GM12878 (cell line): ENCODE measurements at regions of chr1 and their contacts with region 1.

Region 1: GRCh38 chr1:27603681-27604578 is at the start of gene AHDC1:
- DNase-seq: no peak
- ATAC-seq: peak; percentile 75
- H3K4me3 ChIP-seq: peak within 1 kb of the TSS; percentile 83
- H3K27ac ChIP-seq: no peak within 1 kb of the TSS; the same call in 1 of the 2 replicates
- H3K4me1 ChIP-seq: peaks cover 40% of the 10 kb centered on the region
- H3K27me3 ChIP-seq: no peaks in the 10 kb centered on the region
- CTCF ChIP-seq: no peak
- EP300 ChIP-seq: no peak
- POLR2A ChIP-seq: peak; percentile 94
- RAD21 ChIP-seq: no peak
- polyA plus RNA-seq, gene AHDC1: 0.21 to 0.26 TPM

Region 2: DNA sequence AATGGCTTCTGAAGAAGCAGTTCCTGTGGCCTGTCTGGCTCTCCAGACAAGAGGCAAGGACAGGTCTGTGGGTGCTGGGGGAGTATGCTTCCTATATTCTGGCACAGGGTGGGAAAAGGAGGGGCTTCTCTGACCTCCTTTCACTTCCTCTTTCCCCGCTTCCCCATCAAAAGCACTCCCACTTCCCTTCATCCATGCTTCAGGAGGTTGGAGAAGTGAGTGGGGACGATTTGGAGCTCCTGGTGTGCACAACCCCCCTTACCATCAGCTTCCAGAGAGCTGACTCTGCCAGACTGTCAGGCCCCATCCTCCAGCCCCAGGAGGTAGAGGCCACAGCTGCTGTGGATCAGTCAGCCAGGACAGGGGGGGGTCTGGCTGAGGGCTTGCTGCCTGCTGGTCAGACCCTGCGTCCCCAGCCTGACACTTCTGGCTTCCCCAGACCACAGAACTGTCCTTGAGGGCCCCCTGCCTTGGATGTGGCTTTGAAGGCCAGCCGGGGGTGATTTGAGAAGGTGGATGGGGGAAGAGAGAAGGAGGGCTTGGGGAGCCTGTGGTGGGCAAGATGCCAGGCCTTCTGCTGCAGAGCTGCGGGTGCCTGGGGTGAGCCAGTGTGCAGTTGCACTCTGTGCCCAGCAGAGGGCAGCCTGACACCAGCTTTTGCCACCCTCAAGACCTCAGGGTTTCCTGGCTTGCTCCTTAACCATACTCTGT is 303.4 kb before region 1 on chr1:
- CTCF ChIA-PET with region 1: interaction called, 143 read pairs
- POLR2A ChIA-PET with region 1: interaction called, 3 read pairs
- RAD21 ChIA-PET with region 1: interaction called, 12 read pairs
- SMC1A ChIA-PET with region 1: interaction called, 18 read pairs
- in situ Hi-C with region 1: loop called (anchors 5 kb)
- intact Hi-C with region 1: loop called (anchors 2 kb)
- DNase-seq: peak; percentile 32
- ATAC-seq: peak; percentile 96
- H3K4me3 ChIP-seq: no peak overlapping the region
- H3K27ac ChIP-seq: no peak overlapping the region; the same call in 1 of the 2 replicates
- H3K4me1 ChIP-seq: peaks cover 5% of the 10 kb centered on the region
- H3K27me3 ChIP-seq: no peaks in the 10 kb centered on the region
- CTCF ChIP-seq: peak; percentile 99; a peak in 5 of 6 replicates
- EP300 ChIP-seq: no peak
- POLR2A ChIP-seq: no peak
- RAD21 ChIP-seq: peak; percentile 92

Region 3: DNA sequence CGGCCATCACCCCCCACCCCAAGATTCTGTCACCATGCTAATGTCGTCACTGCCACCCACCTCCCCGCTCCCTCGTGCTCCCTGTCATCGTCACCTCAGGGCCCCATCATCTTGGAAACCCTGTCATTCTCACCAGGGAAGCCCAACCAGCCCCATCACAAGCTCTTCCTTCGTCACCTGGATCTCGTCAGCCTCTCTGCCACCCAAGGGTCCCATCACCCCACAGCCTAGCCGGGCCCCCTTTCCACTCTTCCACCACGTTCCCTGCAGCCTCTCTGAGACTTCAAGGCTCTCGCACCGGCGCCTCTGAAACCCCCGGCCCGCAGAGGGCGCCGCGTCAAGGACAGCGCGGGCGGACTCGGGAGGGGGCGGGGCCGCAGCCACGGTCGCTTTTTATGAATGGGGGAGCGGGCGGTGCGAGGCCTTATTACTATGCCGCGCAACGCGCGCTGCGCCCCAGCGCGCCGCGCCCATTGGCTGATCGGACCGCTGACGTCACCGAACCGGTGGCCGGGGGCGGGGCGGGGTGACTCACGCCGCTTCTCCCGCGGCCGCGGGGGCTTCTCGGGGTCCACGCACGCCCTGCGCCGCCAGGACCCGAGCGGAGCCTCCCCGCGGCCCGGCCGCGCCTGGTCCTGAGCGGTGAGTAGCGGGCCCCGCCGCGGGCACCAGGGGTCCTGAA is 211.7 kb before region 1 on chr1 and contains the start of gene GPR3:
- CTCF ChIA-PET with region 1: interaction called, 133 read pairs
- POLR2A ChIA-PET with region 1: interaction called, 9 read pairs
- RAD21 ChIA-PET with region 1: interaction called, 21 read pairs
- SMC1A ChIA-PET with region 1: interaction called, 26 read pairs
- in situ Hi-C with region 1: loop called (anchors 5 kb)
- intact Hi-C with region 1: loop called (anchors 1 kb)
- DNase-seq: no peak
- ATAC-seq: peak; percentile 89
- H3K4me3 ChIP-seq: peak within 1 kb of the TSS; percentile 71
- H3K27ac ChIP-seq: no peak within 1 kb of the TSS
- H3K4me1 ChIP-seq: peaks cover 8% of the 10 kb centered on the region
- H3K27me3 ChIP-seq: no peaks in the 10 kb centered on the region
- CTCF ChIP-seq: peak; percentile 47 to 61 (median 52)
- EP300 ChIP-seq: no peak
- POLR2A ChIP-seq: no peak
- RAD21 ChIP-seq: peak; percentile 31
- polyA plus RNA-seq, gene GPR3: not detected

Region 4: GRCh38 chr1:27489910-27490741 is 113.8 kb before region 1 on chr1 and contains the start of gene WASF2:
- CTCF ChIA-PET with region 1: interaction called, 6 read pairs
- POLR2A ChIA-PET with region 1: interaction called, 3 read pairs
- RAD21 ChIA-PET with region 1: interaction called, 5 read pairs
- SMC1A ChIA-PET with region 1: interaction called, 4 read pairs
- in situ Hi-C with region 1: no loop called
- intact Hi-C with region 1: loop called (anchors 10 kb)
- DNase-seq: peak; percentile 89
- ATAC-seq: peak; percentile 92
- H3K4me3 ChIP-seq: peak within 1 kb of the TSS; percentile 98
- H3K27ac ChIP-seq: peak within 1 kb of the TSS; percentile 99
- H3K4me1 ChIP-seq: peaks cover 27% of the 10 kb centered on the region
- H3K27me3 ChIP-seq: no peaks in the 10 kb centered on the region
- CTCF ChIP-seq: no peak
- EP300 ChIP-seq: peak in 1 of 2 experiments; percentile 35; a peak in 1 of 4 replicates
- POLR2A ChIP-seq: peak; percentile 91
- RAD21 ChIP-seq: no peak
- polyA plus RNA-seq, gene WASF2: 7.0 to 9.3 TPM

Region 5: DNA sequence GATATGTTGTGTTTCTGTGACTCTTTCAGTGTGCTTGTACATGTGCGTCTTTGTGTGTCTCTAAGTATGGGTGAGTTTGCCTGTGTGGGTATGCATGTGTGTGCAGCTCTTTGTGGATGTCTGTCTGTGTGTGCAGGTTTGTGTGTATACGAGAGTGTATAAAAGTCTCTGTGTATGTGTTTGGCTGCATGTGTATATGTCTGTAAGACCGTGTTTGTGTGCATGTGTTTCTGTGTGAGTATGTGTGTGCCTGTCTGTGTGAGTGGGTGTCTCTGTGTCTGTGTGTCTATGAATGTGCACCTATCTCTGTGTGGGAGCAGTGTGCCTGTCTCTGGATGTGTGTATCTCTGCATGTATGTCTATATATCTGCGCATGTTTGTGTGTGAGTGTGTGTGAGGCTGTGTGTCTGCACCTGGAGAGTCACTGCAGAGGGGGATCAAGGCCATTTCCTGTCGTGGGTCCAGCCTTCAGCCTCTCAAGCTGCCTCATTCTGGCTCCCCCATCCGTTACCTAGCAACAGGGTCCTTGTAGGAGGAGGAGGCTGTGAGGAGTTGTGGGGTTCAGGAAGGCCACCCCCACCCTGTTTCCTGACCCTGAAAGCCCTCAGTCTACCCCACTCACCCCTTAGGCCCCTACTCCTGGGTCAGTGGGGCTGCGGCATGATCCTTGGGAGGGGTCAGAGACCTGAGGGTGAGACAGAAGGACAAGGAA is 20.7 kb after region 1 on chr1:
- CTCF ChIA-PET with region 1: interaction called, 208 read pairs
- POLR2A ChIA-PET with region 1: interaction called, 50 read pairs
- RAD21 ChIA-PET with region 1: interaction called, 183 read pairs
- SMC1A ChIA-PET with region 1: interaction called, 114 read pairs
- in situ Hi-C with region 1: no loop called
- intact Hi-C with region 1: no loop called
- DNase-seq: peak; percentile 67
- ATAC-seq: peak; percentile 31
- H3K4me3 ChIP-seq: peak overlapping the region; percentile 93
- H3K27ac ChIP-seq: peak overlapping the region; percentile 85
- H3K4me1 ChIP-seq: peaks cover 63% of the 10 kb centered on the region
- H3K27me3 ChIP-seq: no peaks in the 10 kb centered on the region
- CTCF ChIP-seq: no peak
- EP300 ChIP-seq: no peak
- POLR2A ChIP-seq: no peak
- RAD21 ChIP-seq: no peak

Region 6: GRCh38 chr1:27650539-27651175 is 46.7 kb after region 1 on chr1:
- CTCF ChIA-PET with region 1: interaction called, 30 read pairs
- POLR2A ChIA-PET with region 1: interaction called, 49 read pairs
- RAD21 ChIA-PET with region 1: interaction called, 5 read pairs
- SMC1A ChIA-PET with region 1: interaction called, 38 read pairs
- in situ Hi-C with region 1: no loop called
- intact Hi-C with region 1: no loop called
- DNase-seq: no peak
- ATAC-seq: peak; percentile 38
- H3K4me3 ChIP-seq: no peak overlapping the region
- H3K27ac ChIP-seq: peak overlapping the region; percentile 24
- H3K4me1 ChIP-seq: peaks cover 30% of the 10 kb centered on the region
- H3K27me3 ChIP-seq: no peaks in the 10 kb centered on the region
- CTCF ChIP-seq: no peak
- EP300 ChIP-seq: no peak
- POLR2A ChIP-seq: no peak
- RAD21 ChIP-seq: no peak

Region 7: DNA sequence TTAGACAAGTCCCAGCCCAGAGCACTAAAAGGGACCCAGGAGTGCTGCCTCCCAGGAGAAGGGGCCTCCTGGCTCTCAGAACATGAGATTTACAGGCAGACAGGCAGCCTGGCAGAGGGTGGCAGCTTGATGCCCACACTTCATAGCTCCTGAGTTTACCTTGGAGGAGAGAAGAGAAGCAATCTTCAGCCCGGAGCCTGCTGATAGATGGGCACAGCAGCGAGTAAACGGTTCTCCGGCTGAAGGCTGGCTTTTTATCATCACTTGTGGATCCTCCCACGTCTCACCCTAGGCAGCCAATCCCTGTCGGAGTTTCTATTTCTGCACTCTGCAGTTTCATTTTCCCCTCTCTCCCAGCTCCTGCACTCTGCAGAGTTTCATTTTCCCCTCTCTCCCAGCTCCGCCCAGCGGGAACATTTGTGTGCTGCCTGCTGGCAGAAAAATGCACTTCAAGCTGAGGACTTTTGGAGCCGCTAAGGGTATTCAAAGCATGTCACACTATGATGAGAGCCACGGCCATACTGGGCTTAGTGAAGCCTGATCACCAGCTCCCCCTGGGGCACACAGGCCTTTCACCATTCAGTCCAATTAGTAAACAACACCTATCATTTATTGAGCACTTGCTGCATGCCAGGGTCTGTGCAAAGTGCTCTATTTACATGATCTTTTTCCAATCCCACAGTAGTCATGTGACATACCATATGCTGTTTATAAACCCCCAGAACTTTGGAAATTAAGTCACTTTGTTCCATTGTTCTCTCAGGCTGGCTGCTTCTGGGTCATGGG is 68.2 kb after region 1 on chr1 and contains the start of gene IFI6:
- CTCF ChIA-PET with region 1: interaction called, 327 read pairs
- POLR2A ChIA-PET with region 1: interaction called, 8 read pairs
- RAD21 ChIA-PET with region 1: interaction called, 268 read pairs
- SMC1A ChIA-PET with region 1: interaction called, 248 read pairs
- in situ Hi-C with region 1: no loop called
- intact Hi-C with region 1: no loop called
- DNase-seq: peak; percentile 86
- ATAC-seq: peak; percentile 94
- H3K4me3 ChIP-seq: peak within 1 kb of the TSS; percentile 89
- H3K27ac ChIP-seq: peak within 1 kb of the TSS; percentile 73
- H3K4me1 ChIP-seq: peaks cover 9% of the 10 kb centered on the region
- H3K27me3 ChIP-seq: no peaks in the 10 kb centered on the region
- CTCF ChIP-seq: peak; percentile 35 to 39 (median 38); a peak in 3 of 6 replicates
- EP300 ChIP-seq: no peak
- POLR2A ChIP-seq: peak; percentile 91
- RAD21 ChIP-seq: no peak
- polyA plus RNA-seq, gene IFI6: 5.6 to 21.0 TPM

Region 8: GRCh38 chr1:27744556-27744955 is 140.6 kb after region 1 on chr1:
- CTCF ChIA-PET with region 1: no interaction called
- POLR2A ChIA-PET with region 1: no interaction called
- RAD21 ChIA-PET with region 1: no interaction called
- SMC1A ChIA-PET with region 1: no interaction called
- in situ Hi-C with region 1: no loop called
- intact Hi-C with region 1: no loop called
- DNase-seq: no peak
- ATAC-seq: no peak
- H3K4me3 ChIP-seq: no peak overlapping the region
- H3K27ac ChIP-seq: no peak overlapping the region
- H3K4me1 ChIP-seq: no peaks in the 10 kb centered on the region
- H3K27me3 ChIP-seq: no peaks in the 10 kb centered on the region
- CTCF ChIP-seq: no peak
- EP300 ChIP-seq: no peak
- POLR2A ChIP-seq: no peak
- RAD21 ChIP-seq: no peak